ENCODE measurements at regions of chr1 and their contacts with region 1.

Region 1: GRCh38 chr1:153100236-153100635 is 5.9 kb upstream of the SPRR2E start:
- DNase-seq: peak; percentile 80
- H3K4me3 Mint-ChIP-seq: no peak overlapping the region
- H3K27ac Mint-ChIP-seq: peak overlapping the region; percentile 94
- H3K4me1 Mint-ChIP-seq: peaks cover 59% of the 10 kb centered on the region
- H3K27me3 Mint-ChIP-seq: no peaks in the 10 kb centered on the region
- CTCF ChIP-seq: no peak

Region 2: GRCh38 chr1:152906023-152906565 is 194.1 kb before region 1 on chr1:
- CTCF ChIA-PET with region 1: no interaction called
- intact Hi-C with region 1: loop called (anchors 5 kb)
- DNase-seq: peak; percentile 71
- H3K4me3 Mint-ChIP-seq: no peak overlapping the region
- H3K27ac Mint-ChIP-seq: peak overlapping the region; percentile 34
- H3K4me1 Mint-ChIP-seq: peaks cover 51% of the 10 kb centered on the region
- H3K27me3 Mint-ChIP-seq: peaks cover 21% of the 10 kb centered on the region
- CTCF ChIP-seq: no peak

Region 3: DNA sequence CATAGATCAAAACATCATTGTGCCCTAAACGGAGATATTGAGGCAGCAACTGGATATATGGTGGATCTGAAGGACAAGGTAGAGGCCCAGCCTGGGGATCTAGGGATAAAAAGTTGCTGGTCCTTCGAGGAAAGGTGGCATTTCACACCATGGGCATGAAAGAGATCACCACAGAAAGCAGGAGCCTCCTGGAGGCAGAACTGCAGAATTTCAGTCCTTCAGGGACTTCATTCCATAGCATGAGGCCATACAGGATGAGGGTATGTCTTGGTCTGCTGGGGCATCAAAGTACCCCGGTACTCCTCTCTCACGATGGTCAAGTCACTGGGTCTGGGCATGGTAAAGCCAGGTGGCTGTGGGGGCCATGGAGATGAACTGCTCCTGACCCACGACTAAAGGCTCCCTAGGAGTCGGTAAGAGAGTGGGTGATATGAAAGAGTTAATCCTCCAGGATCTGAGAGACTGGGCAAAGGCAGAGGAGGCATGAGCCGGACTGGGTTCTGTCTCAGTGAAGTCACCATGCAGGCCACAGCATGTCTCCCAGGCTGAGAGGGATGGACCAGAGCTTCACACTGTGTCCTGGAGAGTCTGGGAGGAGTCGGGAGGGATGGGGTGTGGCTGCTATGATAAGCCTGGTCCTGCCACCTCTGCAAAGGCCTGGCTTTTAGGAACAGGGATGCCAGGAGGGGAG is 159.1 kb before region 1 on chr1:
- CTCF ChIA-PET with region 1: no interaction called
- intact Hi-C with region 1: no loop called
- DNase-seq: no peak
- H3K4me3 Mint-ChIP-seq: no peak overlapping the region
- H3K27ac Mint-ChIP-seq: no peak overlapping the region
- H3K4me1 Mint-ChIP-seq: no peaks in the 10 kb centered on the region
- H3K27me3 Mint-ChIP-seq: peaks cover 15% of the 10 kb centered on the region
- CTCF ChIP-seq: no peak

Region 4: DNA sequence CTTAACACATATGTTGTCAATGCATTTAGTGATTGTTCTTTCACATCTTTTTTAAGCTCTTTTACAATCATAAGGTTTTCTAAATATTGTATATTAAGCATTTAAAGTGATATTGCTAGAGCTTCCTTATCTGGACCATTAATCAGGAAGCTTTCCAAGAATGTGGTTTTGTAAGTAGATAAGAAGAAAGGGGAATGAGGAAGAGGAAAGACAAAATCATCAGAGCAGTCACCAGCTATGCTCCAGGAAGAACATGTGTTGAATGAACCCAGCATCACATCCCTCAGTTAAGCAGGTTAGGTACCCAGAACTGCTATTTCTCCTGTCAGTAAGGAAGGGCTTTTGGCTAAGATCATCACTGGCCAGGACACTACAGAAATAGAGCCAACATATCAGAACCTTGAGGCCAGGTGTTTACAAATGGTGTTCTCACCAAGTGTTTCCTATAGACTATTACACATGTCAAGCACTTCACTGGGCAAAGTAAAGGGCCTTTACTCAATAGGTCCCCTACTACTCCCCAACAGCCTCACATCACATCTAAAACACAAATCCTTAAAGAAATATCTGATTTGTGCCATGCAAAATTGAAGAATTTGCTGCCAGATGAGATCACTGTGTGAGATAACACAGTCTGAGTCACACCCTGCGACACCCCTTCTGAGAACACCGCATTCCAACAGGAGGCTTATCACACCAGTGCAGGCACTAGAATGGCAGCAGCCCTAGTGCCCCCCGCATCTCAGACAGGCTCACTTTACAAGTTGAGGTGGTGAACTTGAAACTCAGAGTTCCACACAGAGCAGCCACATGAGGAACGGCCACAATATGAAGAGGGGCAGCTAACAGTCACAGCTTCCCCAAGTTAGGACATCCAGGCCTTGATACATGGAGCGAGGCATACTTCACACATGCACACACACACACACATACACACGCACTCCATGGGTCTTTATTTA is 41.1 kb before region 1 on chr1:
- CTCF ChIA-PET with region 1: no interaction called
- intact Hi-C with region 1: loop called (anchors 2 kb)
- DNase-seq: peak; percentile 62
- H3K4me3 Mint-ChIP-seq: no peak overlapping the region
- H3K27ac Mint-ChIP-seq: peak overlapping the region; percentile 16
- H3K4me1 Mint-ChIP-seq: peaks cover 26% of the 10 kb centered on the region
- H3K27me3 Mint-ChIP-seq: no peaks in the 10 kb centered on the region
- CTCF ChIP-seq: no peak

Region 5: DNA sequence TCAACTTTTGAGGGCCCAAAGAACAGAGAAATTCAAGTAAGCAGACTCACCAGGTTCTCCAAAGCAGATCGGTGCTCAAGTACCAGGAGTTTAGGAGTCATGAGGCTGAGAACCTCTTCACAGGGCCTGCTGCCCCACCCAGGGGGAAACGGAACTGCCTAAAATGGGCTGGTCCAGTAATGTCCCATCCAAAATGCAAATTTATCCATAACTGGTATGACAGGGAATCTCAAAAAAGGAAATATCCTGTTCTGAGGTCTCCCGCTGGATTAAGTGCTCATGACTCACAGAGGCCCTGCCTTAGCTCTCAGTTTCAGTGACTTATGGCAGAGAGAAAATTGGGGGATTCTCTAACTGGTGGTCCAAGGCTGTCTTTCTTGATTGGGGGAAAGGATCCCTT is 41.1 kb after region 1 on chr1:
- CTCF ChIA-PET with region 1: no interaction called
- intact Hi-C with region 1: no loop called
- DNase-seq: no peak
- H3K4me3 Mint-ChIP-seq: no peak overlapping the region
- H3K27ac Mint-ChIP-seq: no peak overlapping the region
- H3K4me1 Mint-ChIP-seq: no peaks in the 10 kb centered on the region
- H3K27me3 Mint-ChIP-seq: no peaks in the 10 kb centered on the region
- CTCF ChIP-seq: no peak

Region 6: GRCh38 chr1:153344531-153344981 is 244.3 kb after region 1 on chr1:
- CTCF ChIA-PET with region 1: no interaction called
- intact Hi-C with region 1: no loop called
- DNase-seq: no peak
- H3K4me3 Mint-ChIP-seq: no peak overlapping the region
- H3K27ac Mint-ChIP-seq: no peak overlapping the region
- H3K4me1 Mint-ChIP-seq: peaks cover 35% of the 10 kb centered on the region
- H3K27me3 Mint-ChIP-seq: peaks cover 95% of the 10 kb centered on the region
- CTCF ChIP-seq: no peak

Measured in Calu3 (cell line).